Right cardiac atrium (tissue), 5 donors: ENCODE measurements at regions of chr9 and their contacts with region 1.

Region 1: DNA sequence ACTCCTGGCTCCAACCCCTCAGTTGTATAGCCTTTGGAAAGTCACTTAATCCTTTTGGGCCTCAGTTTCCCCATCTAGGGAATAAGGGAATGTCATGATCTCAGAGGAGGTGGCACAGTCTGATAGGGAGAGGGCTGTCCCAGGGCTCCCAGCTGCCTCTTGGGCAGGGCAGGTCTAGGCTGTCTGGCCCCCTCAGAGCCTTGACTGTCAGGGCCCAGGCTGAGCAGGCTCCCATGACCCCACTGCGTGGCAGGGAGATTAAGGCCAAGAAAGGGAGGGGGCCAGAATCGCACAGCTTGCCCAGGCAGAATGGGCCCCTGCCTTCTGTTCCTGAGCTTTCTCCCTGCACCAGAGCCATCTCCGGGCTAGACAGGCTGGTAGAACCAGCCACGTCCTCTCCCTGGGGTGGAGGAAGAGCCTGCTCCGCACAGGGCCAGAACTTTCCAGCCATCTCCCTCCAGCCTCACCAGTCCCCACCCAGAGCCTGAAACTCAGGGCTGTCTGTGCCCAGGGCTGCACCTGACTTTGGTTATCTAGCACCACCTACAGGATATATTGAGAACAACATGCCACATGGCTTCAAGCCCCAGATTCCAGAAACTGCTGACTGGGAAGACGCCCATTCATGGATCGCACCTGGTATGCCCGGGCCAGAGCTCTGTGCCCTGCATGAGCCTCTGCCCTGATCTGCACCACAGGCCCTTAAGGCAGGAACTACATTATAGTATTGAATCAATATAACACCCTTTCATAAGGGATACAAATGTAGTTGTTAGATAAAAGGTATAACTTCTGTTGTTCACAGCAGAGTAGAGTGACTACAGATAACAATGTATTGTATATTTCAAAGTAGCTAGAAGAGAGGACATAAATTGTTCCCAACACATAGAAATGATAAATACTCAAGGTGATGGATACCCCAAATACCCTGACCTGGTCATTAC is 32.0 kb downstream of the NAIF1 start:
- DNase-seq: peak; percentile 73 to 87 (median 77)
- ATAC-seq: peak; percentile 95 to 97
- H3K4me3 ChIP-seq: no peak overlapping the region
- H3K27ac ChIP-seq: no peak overlapping the region
- H3K4me1 ChIP-seq: no peaks in the 10 kb centered on the region
- H3K27me3 ChIP-seq: no peaks in the 10 kb centered on the region

Region 2: GRCh38 chr9:127980706-127981558 is 54.2 kb before region 1 on chr9 and contains the start of gene EEIG1:
- intact Hi-C with region 1: loop called in 1 of 4 experiments (anchors 10 kb)
- DNase-seq: peak; percentile 96 to 99 (median 98)
- ATAC-seq: peak; percentile 96
- H3K4me3 ChIP-seq: peak within 1 kb of the TSS; percentile 92
- H3K27ac ChIP-seq: peak within 1 kb of the TSS; percentile 73
- H3K4me1 ChIP-seq: peaks cover 17% of the 10 kb centered on the region
- H3K27me3 ChIP-seq: no peaks in the 10 kb centered on the region
- total RNA-seq, gene EEIG1: 23.1 to 35.1 (median 31.6) TPM

Region 3: DNA sequence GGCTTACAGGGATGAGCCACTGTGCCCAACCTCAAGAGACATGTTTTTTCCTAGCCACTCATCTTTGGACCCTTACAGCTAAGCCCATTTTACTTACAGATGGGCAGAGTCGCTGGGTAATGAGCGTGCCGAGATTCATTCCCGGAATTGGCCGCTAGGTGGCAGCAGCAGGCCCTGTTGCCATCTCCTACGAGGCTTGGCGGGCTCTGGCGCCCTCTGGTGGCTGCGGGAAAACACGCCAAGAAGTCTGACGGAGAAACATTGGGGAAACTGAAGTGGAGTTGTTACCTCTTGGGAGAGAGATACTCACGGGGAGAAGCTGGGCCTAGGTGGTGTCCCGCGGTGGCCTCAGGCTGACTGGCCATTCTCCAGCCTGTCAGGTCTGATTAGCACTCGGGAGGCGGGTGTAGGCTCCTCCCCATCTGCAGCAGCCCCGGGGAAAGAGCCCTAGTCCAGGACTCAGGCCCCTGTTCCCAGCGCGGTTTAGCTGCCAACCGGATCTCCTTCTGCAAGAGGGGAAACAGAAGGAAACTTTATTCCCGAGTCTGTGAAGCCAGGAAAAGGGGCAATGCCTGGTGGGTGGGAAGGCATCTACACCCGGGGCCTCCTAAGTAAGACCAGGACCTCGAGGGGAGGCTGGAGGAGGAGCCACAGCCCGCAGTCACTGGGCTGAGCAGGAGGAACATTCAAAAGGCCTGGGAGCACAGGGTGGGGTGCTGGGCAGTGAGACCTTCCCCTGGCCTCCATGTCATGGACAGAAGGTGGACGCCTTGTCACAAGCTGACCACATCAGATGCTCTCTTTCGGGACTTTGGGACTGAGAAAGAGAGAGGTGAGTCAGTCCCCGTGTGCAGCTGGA is 82.7 kb after region 1 on chr9:
- intact Hi-C with region 1: loop called in 1 of 4 experiments (anchors 5 kb)
- DNase-seq: peak; percentile 95 to 98 (median 98)
- ATAC-seq: peak; percentile 58 to 60
- H3K4me3 ChIP-seq: no peak overlapping the region
- H3K27ac ChIP-seq: no peak overlapping the region
- H3K4me1 ChIP-seq: no peaks in the 10 kb centered on the region
- H3K27me3 ChIP-seq: no peaks in the 10 kb centered on the region